Caco-2 (cell line): ENCODE measurements at regions of chr11 and their contacts with region 1.

Region 1: GRCh38 chr11:123020968-123021367 is 39.3 kb upstream of the BSX start:
- DNase-seq: peak; percentile 53 to 59
- H3K4me3 ChIP-seq: no peak overlapping the region
- H3K4me3 Mint-ChIP-seq: no peak overlapping the region
- H3K27ac Mint-ChIP-seq: no peak overlapping the region
- H3K4me1 ChIP-seq: no peaks in the 10 kb centered on the region
- H3K4me1 Mint-ChIP-seq: peaks cover 6% of the 10 kb centered on the region
- H3K27me3 ChIP-seq: no peaks in the 10 kb centered on the region; the same call in 1 of the 2 replicates
- H3K27me3 Mint-ChIP-seq: peaks cover 20% of the 10 kb centered on the region
- CTCF ChIP-seq: peak; percentile 79

Region 2: GRCh38 chr11:122628810-122629555 is 392.0 kb before region 1 on chr11:
- CTCF ChIA-PET with region 1: no interaction called
- POLR2A ChIA-PET with region 1: no interaction called
- intact Hi-C with region 1: loop called (anchors 5 kb)
- DNase-seq: peak; percentile 82 to 86
- H3K4me3 ChIP-seq: no peak overlapping the region
- H3K4me3 Mint-ChIP-seq: no peak overlapping the region
- H3K27ac Mint-ChIP-seq: no peak overlapping the region
- H3K4me1 ChIP-seq: no peaks in the 10 kb centered on the region
- H3K4me1 Mint-ChIP-seq: peaks cover 7% of the 10 kb centered on the region
- H3K27me3 ChIP-seq: no peaks in the 10 kb centered on the region
- H3K27me3 Mint-ChIP-seq: peaks cover under 1% of the 10 kb centered on the region
- CTCF ChIP-seq: peak; percentile 92 to 98

Region 3: DNA sequence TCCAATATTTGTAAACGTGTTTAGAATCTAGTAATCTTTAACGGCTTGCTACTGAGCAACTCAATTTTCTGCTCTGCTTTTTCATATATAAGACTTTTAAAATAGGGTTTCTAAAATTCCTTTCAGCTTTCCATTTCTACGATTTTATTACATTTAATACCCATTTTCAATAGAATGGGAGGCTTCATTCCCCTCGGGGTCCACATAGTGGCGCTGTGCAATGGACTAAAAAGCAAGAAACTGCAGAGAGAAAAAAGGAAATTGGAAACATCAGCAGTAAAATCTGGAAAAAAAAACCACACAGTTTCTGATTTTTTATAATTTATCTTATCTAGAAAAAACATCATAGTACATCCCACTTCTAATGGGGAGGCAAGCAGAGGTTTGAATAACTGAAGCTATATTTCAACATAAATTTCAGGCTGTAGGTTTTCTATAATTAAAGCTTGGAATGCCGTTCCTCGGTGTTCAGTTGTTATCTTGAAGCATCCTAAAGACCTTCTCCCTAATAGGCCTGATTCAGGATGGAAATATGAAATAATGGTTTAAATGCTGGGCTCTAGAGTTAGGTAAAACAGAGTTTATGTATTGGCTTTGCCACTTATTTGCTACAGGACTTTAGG is 157.2 kb before region 1 on chr11:
- CTCF ChIA-PET with region 1: interaction called, 25 read pairs
- POLR2A ChIA-PET with region 1: no interaction called
- intact Hi-C with region 1: loop called (anchors 1 kb)
- DNase-seq: peak; percentile 28 to 65
- H3K4me3 ChIP-seq: no peak overlapping the region
- H3K4me3 Mint-ChIP-seq: no peak overlapping the region
- H3K27ac Mint-ChIP-seq: no peak overlapping the region
- H3K4me1 ChIP-seq: peaks cover 8% of the 10 kb centered on the region; the same call in 1 of the 2 replicates
- H3K4me1 Mint-ChIP-seq: no peaks in the 10 kb centered on the region
- H3K27me3 ChIP-seq: no peaks in the 10 kb centered on the region
- H3K27me3 Mint-ChIP-seq: peaks cover 43% of the 10 kb centered on the region
- CTCF ChIP-seq: peak; percentile 89 to 97

Region 4: DNA sequence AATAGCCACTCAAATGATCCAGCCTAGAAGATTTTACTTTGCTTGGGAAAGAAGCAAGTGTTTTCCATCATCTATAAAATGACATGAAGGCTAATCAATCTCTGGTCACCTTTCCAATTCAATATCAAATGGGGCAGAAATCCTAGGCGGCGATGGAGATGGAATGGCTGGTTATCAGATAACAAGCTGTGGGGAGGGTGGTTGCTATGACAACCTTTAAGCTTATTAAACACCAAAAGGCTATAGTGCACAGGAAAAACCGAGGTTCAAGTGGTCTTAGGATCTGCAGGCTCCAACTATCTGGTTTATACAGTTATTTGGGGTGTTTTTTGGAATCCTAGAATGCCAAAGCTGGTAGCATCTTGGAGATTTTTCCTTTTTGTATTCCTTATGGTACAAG is 25.4 kb before region 1 on chr11:
- CTCF ChIA-PET with region 1: no interaction called
- POLR2A ChIA-PET with region 1: no interaction called
- intact Hi-C with region 1: no loop called
- DNase-seq: no peak
- H3K4me3 ChIP-seq: no peak overlapping the region
- H3K4me3 Mint-ChIP-seq: no peak overlapping the region
- H3K27ac Mint-ChIP-seq: no peak overlapping the region
- H3K4me1 ChIP-seq: no peaks in the 10 kb centered on the region
- H3K4me1 Mint-ChIP-seq: no peaks in the 10 kb centered on the region
- H3K27me3 ChIP-seq: 0 out of 2 replicates have a peak, but pooled peaks cover 1% of the 10 kb centered on the region
- H3K27me3 Mint-ChIP-seq: peaks cover 29% of the 10 kb centered on the region
- CTCF ChIP-seq: no peak

Region 5: GRCh38 chr11:123006860-123007542 is 14.0 kb before region 1 on chr11:
- CTCF ChIA-PET with region 1: interaction called, 25 read pairs
- POLR2A ChIA-PET with region 1: no interaction called
- intact Hi-C with region 1: loop called (anchors 1 kb)
- DNase-seq: no peak
- H3K4me3 ChIP-seq: no peak overlapping the region
- H3K4me3 Mint-ChIP-seq: no peak overlapping the region
- H3K27ac Mint-ChIP-seq: no peak overlapping the region
- H3K4me1 ChIP-seq: peaks cover 8% of the 10 kb centered on the region
- H3K4me1 Mint-ChIP-seq: peaks cover 7% of the 10 kb centered on the region
- H3K27me3 ChIP-seq: no peaks in the 10 kb centered on the region; the same call in 1 of the 2 replicates
- H3K27me3 Mint-ChIP-seq: peaks cover 3% of the 10 kb centered on the region
- CTCF ChIP-seq: peak in 1 of 2 experiments; percentile 10